ENCODE measurements at regions of chr2 and their contacts with region 1.

Region 1: GRCh38 chr2:62456721-62457539 is 49.1 kb downstream of the TMEM17 start:
- DNase-seq: no peak
- H3K4me3 ChIP-seq: peak overlapping the region; percentile 55
- H3K27me3 ChIP-seq: no peaks in the 10 kb centered on the region
- CTCF ChIP-seq: peak; percentile 77

Region 2: DNA sequence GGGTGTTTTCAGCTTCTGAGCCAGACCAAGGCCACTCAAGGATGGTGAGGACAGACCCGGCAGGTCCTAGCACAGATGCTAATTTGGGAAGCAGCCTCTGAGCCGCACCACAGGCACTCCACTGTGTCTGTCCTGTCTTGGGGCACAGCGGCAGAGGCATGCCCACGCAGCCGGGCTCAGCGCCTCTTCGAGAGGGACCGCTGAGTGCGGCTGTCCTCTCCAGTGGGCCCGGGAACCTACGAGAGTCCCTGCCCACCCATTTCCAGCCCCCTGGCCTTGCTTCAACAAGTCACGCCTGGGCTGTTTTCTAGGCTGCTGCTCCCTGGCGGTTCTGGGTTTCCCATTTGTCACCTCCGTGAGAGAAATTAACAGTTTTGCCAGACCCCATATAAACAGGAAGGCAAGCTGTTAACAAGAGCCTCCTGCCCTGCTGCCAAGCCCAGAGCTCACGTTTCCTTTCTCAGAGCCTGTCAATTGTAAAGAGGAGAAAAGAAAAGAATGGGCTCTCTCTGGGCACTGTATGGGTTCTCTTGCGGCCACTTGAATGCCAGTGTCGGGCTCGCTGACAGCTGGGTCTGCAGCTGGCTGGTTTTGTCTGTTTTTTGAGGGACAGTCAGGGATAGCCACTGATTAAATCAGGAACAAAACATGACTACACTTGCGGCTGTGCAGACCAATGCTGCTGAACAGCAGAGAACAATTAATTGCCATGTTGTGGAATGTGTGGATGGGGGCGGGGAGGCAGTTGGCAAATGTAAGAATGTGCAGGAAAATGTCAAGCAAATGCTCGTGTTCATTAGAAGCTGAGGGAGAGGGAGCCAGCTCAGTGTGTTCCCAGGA is 18.5 kb after region 1 on chr2:
- CTCF ChIA-PET with region 1: interaction called, 13 read pairs
- POLR2A ChIA-PET with region 1: no interaction called
- DNase-seq: no peak
- H3K4me3 ChIP-seq: no peak overlapping the region
- H3K27me3 ChIP-seq: no peaks in the 10 kb centered on the region
- CTCF ChIP-seq: no peak

Region 3: DNA sequence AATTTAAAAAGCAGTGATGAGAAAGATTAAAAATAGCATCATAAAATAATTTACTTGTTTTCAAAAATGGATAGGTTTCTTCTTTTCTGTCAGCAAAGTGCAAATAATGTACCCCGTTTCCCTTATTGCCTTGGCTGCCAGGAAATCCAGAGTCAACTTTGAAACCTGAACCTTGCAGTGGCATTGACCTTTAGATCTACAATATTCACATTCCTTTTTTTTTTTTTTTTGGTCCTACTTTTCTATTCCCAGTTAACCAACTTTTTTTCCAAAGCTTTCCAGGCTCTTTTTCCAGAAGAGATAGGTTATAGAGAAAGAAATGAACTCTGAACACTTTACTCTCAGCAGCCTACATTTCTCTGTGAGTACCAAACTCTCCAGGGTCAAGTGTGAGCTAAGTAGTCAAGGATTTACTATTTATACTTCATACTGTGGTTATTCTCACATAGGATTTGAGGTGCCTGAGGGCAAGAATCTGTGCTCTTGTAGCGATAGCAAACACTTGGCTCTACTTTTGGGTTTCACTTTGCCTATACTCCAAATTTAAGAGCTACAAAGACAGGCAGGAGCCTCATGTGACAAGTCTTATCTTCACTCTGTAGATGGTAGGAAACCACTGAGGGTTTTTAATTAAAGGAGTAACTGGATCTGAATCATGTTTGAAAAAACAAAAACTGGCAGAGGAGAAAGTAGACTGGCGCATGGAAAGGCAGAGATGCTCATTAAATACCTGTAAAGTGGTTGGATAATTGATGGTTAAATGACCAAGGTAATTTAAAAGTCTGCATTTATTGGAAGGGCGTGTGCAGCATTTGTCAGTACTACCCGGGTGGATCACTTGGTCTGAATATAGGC is 112.3 kb after region 1 on chr2:
- CTCF ChIA-PET with region 1: interaction called, 12 read pairs
- POLR2A ChIA-PET with region 1: no interaction called
- DNase-seq: no peak
- H3K4me3 ChIP-seq: no peak overlapping the region
- H3K27me3 ChIP-seq: no peaks in the 10 kb centered on the region
- CTCF ChIP-seq: no peak

Region 4: GRCh38 chr2:62596061-62596921 is 139.4 kb after region 1 on chr2:
- CTCF ChIA-PET with region 1: interaction called, 12 read pairs
- POLR2A ChIA-PET with region 1: no interaction called
- DNase-seq: peak; percentile 96
- H3K4me3 ChIP-seq: no peak overlapping the region
- H3K27me3 ChIP-seq: no peaks in the 10 kb centered on the region
- CTCF ChIP-seq: no peak

Region 5: GRCh38 chr2:62660582-62661262 is 203.8 kb after region 1 on chr2:
- CTCF ChIA-PET with region 1: interaction called, 26 read pairs
- POLR2A ChIA-PET with region 1: interaction called, 12 read pairs
- DNase-seq: no peak
- H3K4me3 ChIP-seq: no peak overlapping the region
- H3K27me3 ChIP-seq: no peaks in the 10 kb centered on the region
- CTCF ChIP-seq: no peak